Activated naive CD4-positive, alpha-beta T cell treated with anti-CD3 and anti-CD28 coated beads for 36 hours (primary cell): ENCODE measurements at regions of chrX and their contacts with region 1.

Region 1: DNA sequence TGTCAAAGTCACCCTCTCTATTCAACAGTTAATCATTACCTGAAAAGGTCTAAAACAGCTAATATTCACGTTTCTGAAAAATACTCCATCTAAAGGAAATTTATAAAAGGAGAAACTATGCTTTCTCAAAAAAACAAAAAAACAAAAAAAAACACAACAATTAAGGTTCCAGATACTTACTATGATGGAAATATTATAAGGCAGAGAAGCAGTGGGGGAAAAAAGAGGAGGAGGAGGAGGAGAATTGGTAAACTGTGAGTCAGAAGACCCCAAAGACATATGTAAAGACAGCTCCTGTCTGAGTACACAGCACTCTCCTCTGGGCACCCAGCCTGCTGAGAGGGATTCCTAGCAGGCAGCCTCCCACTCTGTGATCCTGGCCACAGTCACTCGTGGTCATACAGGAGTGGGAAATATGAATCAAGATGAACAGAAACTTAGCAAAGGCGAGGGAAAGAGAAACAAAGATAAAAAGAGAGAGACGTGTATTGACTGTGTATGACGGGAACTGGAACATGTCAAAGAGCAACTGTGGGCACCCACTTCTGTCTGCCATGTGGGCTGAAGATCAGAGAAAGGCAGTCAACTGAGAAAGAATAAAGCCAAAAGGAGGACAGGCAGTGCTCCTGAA is 12.5 kb downstream of the KLHL15 start:
- DNase-seq: peak; percentile 76
- H3K4me3 Mint-ChIP-seq: peak overlapping the region; percentile 67
- H3K27ac Mint-ChIP-seq: peak overlapping the region; percentile 92
- H3K4me1 Mint-ChIP-seq: peaks cover 37% of the 10 kb centered on the region
- H3K27me3 Mint-ChIP-seq: no peaks in the 10 kb centered on the region

Region 2: GRCh38 chrX:23263892-23264291 is 750.6 kb before region 1 on chrX:
- CTCF ChIA-PET with region 1: no interaction called
- intact Hi-C with region 1: no loop called
- DNase-seq: no peak
- H3K4me3 Mint-ChIP-seq: no peak overlapping the region
- H3K27ac Mint-ChIP-seq: no peak overlapping the region
- H3K4me1 Mint-ChIP-seq: no peaks in the 10 kb centered on the region
- H3K27me3 Mint-ChIP-seq: no peaks in the 10 kb centered on the region

Region 3: GRCh38 chrX:23952984-23953907 is 61.3 kb before region 1 on chrX:
- CTCF ChIA-PET with region 1: no interaction called
- intact Hi-C with region 1: loop called (anchors 1 kb)
- DNase-seq: peak; percentile 70
- H3K4me3 Mint-ChIP-seq: peak overlapping the region; percentile 79
- H3K27ac Mint-ChIP-seq: peak overlapping the region; percentile 97
- H3K4me1 Mint-ChIP-seq: peaks cover 16% of the 10 kb centered on the region
- H3K27me3 Mint-ChIP-seq: no peaks in the 10 kb centered on the region

Region 4: GRCh38 chrX:23993012-23993633 is 21.4 kb before region 1 on chrX:
- CTCF ChIA-PET with region 1: interaction called, 6 read pairs
- intact Hi-C with region 1: loop called (anchors 1 kb)
- DNase-seq: peak; percentile 14
- H3K4me3 Mint-ChIP-seq: no peak overlapping the region
- H3K27ac Mint-ChIP-seq: peak overlapping the region; percentile 83
- H3K4me1 Mint-ChIP-seq: peaks cover 38% of the 10 kb centered on the region
- H3K27me3 Mint-ChIP-seq: no peaks in the 10 kb centered on the region

Region 5: GRCh38 chrX:24024819-24025740 is 10.6 kb after region 1 on chrX:
- CTCF ChIA-PET with region 1: interaction called, 5 read pairs
- intact Hi-C with region 1: loop called (anchors 1 kb)
- DNase-seq: peak; percentile 89
- H3K4me3 Mint-ChIP-seq: peak overlapping the region; percentile 85
- H3K27ac Mint-ChIP-seq: peak overlapping the region; percentile 71
- H3K4me1 Mint-ChIP-seq: peaks cover 20% of the 10 kb centered on the region
- H3K27me3 Mint-ChIP-seq: no peaks in the 10 kb centered on the region

Region 6: DNA sequence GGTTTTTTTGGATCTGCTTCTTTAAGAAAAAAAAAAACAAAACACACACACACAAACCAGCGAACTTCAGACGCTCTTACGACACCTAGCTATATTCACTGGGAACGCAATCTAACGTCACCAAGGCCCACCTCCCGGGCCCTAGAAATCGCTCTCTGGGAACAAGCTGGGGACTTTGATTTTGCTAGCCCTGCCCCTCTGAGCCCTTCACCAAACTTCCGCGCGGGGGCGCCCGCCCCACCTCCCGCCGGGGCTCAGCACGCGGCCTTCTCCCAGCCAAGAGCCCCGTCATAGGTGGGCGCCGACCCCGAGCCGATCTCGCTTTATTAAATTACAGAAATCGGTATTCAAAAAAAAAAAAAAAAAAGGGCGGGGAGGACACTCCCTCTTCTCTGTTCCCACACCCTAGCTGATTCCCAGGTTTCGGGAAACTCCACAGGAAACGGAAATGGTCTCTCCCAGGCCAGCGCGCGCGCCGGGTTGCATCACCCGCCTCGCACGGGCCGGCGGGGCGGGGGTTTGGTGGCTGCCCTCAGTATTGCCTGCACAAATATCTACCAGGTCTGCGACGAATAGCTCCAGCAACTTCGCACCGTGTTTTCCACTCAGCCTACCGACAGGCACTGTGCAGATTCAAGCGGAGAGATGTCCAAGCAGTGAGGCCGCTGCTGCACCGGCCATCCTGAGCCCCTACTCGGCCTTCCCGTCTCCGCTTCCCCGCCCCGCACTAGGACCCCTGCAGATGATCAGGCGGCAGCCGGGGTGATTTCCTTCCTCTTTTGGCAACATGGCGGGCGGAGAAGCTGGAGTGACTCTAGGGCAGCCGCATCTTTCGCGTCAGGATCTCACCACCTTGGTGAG is 39.9 kb after region 1 on chrX and contains the start of gene EIF2S3:
- CTCF ChIA-PET with region 1: interaction called, 3 read pairs
- intact Hi-C with region 1: loop called (anchors 2 kb)
- DNase-seq: peak; percentile 87
- H3K4me3 Mint-ChIP-seq: no peak within 1 kb of the TSS
- H3K27ac Mint-ChIP-seq: no peak within 1 kb of the TSS
- H3K4me1 Mint-ChIP-seq: peaks cover 10% of the 10 kb centered on the region
- H3K27me3 Mint-ChIP-seq: no peaks in the 10 kb centered on the region
- total RNA-seq, gene EIF2S3: 366 to 386 TPM

Region 7: GRCh38 chrX:24156177-24156576 is 141.7 kb after region 1 on chrX:
- CTCF ChIA-PET with region 1: no interaction called
- intact Hi-C with region 1: no loop called
- DNase-seq: no peak
- H3K4me3 Mint-ChIP-seq: no peak overlapping the region
- H3K27ac Mint-ChIP-seq: peak overlapping the region; percentile 46
- H3K4me1 Mint-ChIP-seq: peaks cover 65% of the 10 kb centered on the region
- H3K27me3 Mint-ChIP-seq: no peaks in the 10 kb centered on the region

Region 8: DNA sequence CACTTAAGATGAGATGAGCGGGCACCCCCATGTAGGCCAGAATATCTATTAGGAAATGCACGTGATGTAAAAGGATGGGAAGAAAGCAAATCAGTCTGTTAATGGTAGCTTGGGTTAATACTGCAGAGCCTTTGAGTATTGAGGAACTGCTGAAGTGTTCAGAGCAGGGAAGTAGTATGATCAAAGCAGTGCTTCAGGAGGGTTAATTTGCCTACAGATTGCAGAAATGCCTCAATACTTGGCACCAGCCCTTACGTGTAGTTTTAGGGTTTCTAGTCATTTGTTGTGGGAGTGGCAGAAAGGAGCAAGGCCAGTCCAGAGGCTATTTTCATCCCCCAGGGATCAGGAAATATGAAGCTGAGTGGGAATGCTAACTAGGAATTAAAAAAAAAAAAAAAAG is 154.7 kb after region 1 on chrX:
- CTCF ChIA-PET with region 1: no interaction called
- intact Hi-C with region 1: loop called (anchors 5 kb)
- DNase-seq: peak; percentile 14
- H3K4me3 Mint-ChIP-seq: peak overlapping the region; percentile 6
- H3K27ac Mint-ChIP-seq: peak overlapping the region; percentile 84
- H3K4me1 Mint-ChIP-seq: peaks cover 62% of the 10 kb centered on the region
- H3K27me3 Mint-ChIP-seq: no peaks in the 10 kb centered on the region